ENCODE measurements at regions of chr6 and their contacts with region 1.

Region 1: GRCh38 chr6:46419576-46420002 is 71.7 kb downstream of the RCAN2 start:
- DNase-seq: no peak
- H3K4me3 Mint-ChIP-seq: no peak overlapping the region
- H3K27ac Mint-ChIP-seq: no peak overlapping the region
- H3K4me1 Mint-ChIP-seq: no peaks in the 10 kb centered on the region
- H3K27me3 Mint-ChIP-seq: peaks cover 17% of the 10 kb centered on the region

Region 2: DNA sequence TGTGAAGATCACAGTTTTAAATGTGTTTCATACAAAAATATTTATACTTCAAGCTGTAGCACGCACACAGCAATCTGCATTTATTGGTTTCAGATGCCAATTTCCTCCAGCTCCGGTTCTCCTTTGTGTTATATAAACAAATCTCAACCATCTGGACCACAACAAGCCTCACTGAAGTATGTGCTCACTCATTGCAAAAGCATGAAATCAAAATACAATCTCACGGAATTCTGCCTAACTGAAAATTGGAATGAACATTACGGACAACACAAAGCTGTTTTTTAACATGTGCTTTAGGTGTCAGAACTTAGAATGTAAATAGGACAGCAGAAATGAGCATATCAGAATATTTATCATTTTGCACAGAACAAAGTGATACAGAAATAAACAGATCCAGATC is 33.6 kb after region 1 on chr6:
- intact Hi-C with region 1: no loop called
- DNase-seq: no peak
- H3K4me3 Mint-ChIP-seq: no peak overlapping the region
- H3K27ac Mint-ChIP-seq: no peak overlapping the region
- H3K4me1 Mint-ChIP-seq: no peaks in the 10 kb centered on the region
- H3K27me3 Mint-ChIP-seq: peaks cover 11% of the 10 kb centered on the region

Region 3: GRCh38 chr6:46626228-46626909 is 206.8 kb after region 1 on chr6:
- intact Hi-C with region 1: loop called (anchors 1 kb)
- DNase-seq: no peak
- H3K4me3 Mint-ChIP-seq: no peak overlapping the region
- H3K27ac Mint-ChIP-seq: no peak overlapping the region
- H3K4me1 Mint-ChIP-seq: no peaks in the 10 kb centered on the region
- H3K27me3 Mint-ChIP-seq: peaks cover 9% of the 10 kb centered on the region

Region 4: GRCh38 chr6:46781478-46782378 is 362.1 kb after region 1 on chr6:
- intact Hi-C with region 1: loop called (anchors 2 kb)
- DNase-seq: no peak
- H3K4me3 Mint-ChIP-seq: no peak overlapping the region
- H3K27ac Mint-ChIP-seq: no peak overlapping the region
- H3K4me1 Mint-ChIP-seq: no peaks in the 10 kb centered on the region
- H3K27me3 Mint-ChIP-seq: peaks cover 2% of the 10 kb centered on the region

Region 5: GRCh38 chr6:47047479-47048407 is 628.2 kb after region 1 on chr6:
- intact Hi-C with region 1: loop called (anchors 5 kb)
- DNase-seq: peak; percentile 2
- H3K4me3 Mint-ChIP-seq: no peak overlapping the region
- H3K27ac Mint-ChIP-seq: no peak overlapping the region
- H3K4me1 Mint-ChIP-seq: peaks cover 5% of the 10 kb centered on the region
- H3K27me3 Mint-ChIP-seq: peaks cover 3% of the 10 kb centered on the region